ENCODE measurements at regions of chr1 and their contacts with region 1.

Region 1: GRCh38 chr1:35505908-35506798 is 51.0 kb downstream of the KIAA0319L start:
- DNase-seq: peak; percentile 26 to 89 (median 40)
- ATAC-seq: peak; percentile 77
- H3K4me3 ChIP-seq: peak overlapping the region; percentile 24
- H3K4me3 Mint-ChIP-seq: peak overlapping the region; percentile 62
- H3K27ac ChIP-seq: peak overlapping the region; percentile 72 to 81
- H3K27ac Mint-ChIP-seq: peak overlapping the region; percentile 88
- H3K4me1 ChIP-seq: peaks cover 41% of the 10 kb centered on the region
- H3K4me1 Mint-ChIP-seq: peaks cover 82% of the 10 kb centered on the region
- H3K27me3 ChIP-seq: no peaks in the 10 kb centered on the region
- H3K27me3 Mint-ChIP-seq: no peaks in the 10 kb centered on the region
- CTCF ChIP-seq: no peak

Region 2: GRCh38 chr1:35255276-35255675 is 250.9 kb before region 1 on chr1:
- CTCF ChIA-PET with region 1: no interaction called
- POLR2A ChIA-PET with region 1: no interaction called
- intact Hi-C with region 1: no loop called
- DNase-seq: no peak
- ATAC-seq: no peak
- H3K4me3 ChIP-seq: no peak overlapping the region
- H3K4me3 Mint-ChIP-seq: no peak overlapping the region
- H3K27ac ChIP-seq: no peak overlapping the region
- H3K27ac Mint-ChIP-seq: no peak overlapping the region
- H3K4me1 ChIP-seq: no peaks in the 10 kb centered on the region
- H3K4me1 Mint-ChIP-seq: no peaks in the 10 kb centered on the region
- H3K27me3 ChIP-seq: no peaks in the 10 kb centered on the region
- H3K27me3 Mint-ChIP-seq: peaks cover 8% of the 10 kb centered on the region
- CTCF ChIP-seq: no peak

Region 3: DNA sequence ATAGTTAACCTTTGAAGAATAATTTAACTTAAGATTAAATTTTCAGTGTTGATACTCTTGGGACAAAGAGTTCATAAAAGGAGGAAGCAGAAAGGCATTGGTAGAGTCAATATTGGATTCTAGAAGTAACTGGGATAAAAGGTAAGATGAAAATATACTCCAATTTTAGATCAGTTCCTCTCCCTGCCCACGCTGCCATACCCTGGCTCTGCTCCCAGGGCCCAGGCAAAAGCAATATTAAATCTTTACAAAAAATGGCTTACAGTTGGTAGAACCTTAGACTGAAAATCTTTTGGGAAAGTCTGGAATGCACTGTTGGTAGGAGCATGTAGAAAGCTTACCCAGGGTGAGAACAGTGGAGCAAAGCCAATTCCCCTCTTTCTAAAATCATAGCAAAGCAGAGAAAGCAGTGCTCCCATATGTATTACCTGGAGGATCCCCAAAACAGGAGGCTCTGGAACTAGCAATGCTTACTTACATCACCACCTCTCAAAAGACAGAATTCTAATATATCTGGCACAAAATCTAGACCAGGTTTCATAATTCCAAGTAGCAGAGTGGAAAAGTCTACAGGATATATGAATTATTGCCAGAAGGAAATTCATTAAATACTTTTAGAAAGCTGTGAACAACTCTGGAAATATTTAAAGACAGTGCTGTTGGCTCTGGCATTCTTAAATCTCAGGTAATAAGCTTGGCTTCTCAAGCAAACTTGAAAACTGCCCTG is 26.5 kb after region 1 on chr1:
- CTCF ChIA-PET with region 1: interaction called, 7 read pairs
- POLR2A ChIA-PET with region 1: interaction called, 35 read pairs
- intact Hi-C with region 1: loop called in 1 of 2 experiments (anchors 1 kb)
- DNase-seq: no peak
- ATAC-seq: no peak
- H3K4me3 ChIP-seq: no peak overlapping the region
- H3K4me3 Mint-ChIP-seq: no peak overlapping the region
- H3K27ac ChIP-seq: no peak overlapping the region
- H3K27ac Mint-ChIP-seq: no peak overlapping the region
- H3K4me1 ChIP-seq: peaks cover 8% of the 10 kb centered on the region
- H3K4me1 Mint-ChIP-seq: peaks cover 48% of the 10 kb centered on the region
- H3K27me3 ChIP-seq: no peaks in the 10 kb centered on the region
- H3K27me3 Mint-ChIP-seq: no peaks in the 10 kb centered on the region
- CTCF ChIP-seq: no peak

Region 4: DNA sequence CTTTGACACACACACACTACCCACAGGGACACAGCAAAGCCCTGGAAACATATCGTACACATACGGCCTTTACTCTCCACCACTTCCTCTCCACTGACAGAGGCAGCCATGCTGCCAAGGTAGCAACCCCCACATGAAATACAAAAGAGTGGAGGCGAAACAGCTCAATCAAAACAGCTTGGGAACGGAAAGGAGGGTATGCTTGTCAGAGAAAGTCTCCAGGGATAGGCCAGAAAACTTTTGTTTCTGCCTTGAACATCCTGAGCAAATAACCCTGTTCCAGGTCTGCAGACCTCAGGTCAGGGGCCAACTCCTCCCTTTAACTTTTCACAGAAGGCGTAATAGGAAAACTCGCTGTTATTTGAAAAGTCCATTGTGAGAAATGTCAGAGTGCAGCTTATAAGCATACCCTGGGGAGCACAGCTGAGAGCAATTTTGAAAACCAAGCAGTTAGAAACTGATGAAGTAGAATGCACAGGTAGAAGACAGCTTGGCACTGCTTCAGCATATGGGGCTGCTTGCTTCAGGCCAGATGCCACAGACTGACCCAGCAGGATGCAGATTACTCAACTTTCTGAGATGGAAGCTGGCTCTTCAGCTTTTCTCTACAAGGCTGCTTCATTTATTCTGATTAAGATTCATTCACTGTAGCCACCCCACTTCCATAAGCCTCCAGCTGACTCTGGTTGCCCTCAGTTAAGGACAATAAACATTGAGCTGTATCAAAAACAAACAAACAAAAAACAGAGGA is 33.1 kb after region 1 on chr1:
- CTCF ChIA-PET with region 1: interaction called, 7 read pairs
- POLR2A ChIA-PET with region 1: interaction called, 38 read pairs
- intact Hi-C with region 1: loop called in 1 of 2 experiments (anchors 1 kb)
- DNase-seq: peak in 11 of 14 experiments; percentile 20 to 83 (median 45)
- ATAC-seq: peak; percentile 91
- H3K4me3 ChIP-seq: peak overlapping the region; percentile 9
- H3K4me3 Mint-ChIP-seq: peak overlapping the region; percentile 87
- H3K27ac ChIP-seq: peak overlapping the region; percentile 59 to 64
- H3K27ac Mint-ChIP-seq: peak overlapping the region; percentile 97
- H3K4me1 ChIP-seq: peaks cover 45% of the 10 kb centered on the region
- H3K4me1 Mint-ChIP-seq: peaks cover 89% of the 10 kb centered on the region
- H3K27me3 ChIP-seq: no peaks in the 10 kb centered on the region
- H3K27me3 Mint-ChIP-seq: no peaks in the 10 kb centered on the region
- CTCF ChIP-seq: no peak

Region 5: GRCh38 chr1:35577071-35577998 is 71.2 kb after region 1 on chr1:
- CTCF ChIA-PET with region 1: no interaction called
- POLR2A ChIA-PET with region 1: interaction called, 10 read pairs
- intact Hi-C with region 1: no loop called
- DNase-seq: peak; percentile 35 to 88 (median 59)
- ATAC-seq: peak; percentile 80
- H3K4me3 ChIP-seq: peak overlapping the region; percentile 81
- H3K4me3 Mint-ChIP-seq: peak overlapping the region; percentile 90
- H3K27ac ChIP-seq: no peak overlapping the region
- H3K27ac Mint-ChIP-seq: peak overlapping the region; percentile 12
- H3K4me1 ChIP-seq: peaks cover 31% of the 10 kb centered on the region
- H3K4me1 Mint-ChIP-seq: peaks cover 26% of the 10 kb centered on the region
- H3K27me3 ChIP-seq: peaks cover 0 to 2% of the 10 kb centered on the region in 2 experiments
- H3K27me3 Mint-ChIP-seq: peaks cover 5% of the 10 kb centered on the region
- CTCF ChIP-seq: no peak

Measured in CD4-positive, alpha-beta T cell (primary cell).